ENCODE measurements at regions of chr5 and their contacts with region 1.

Region 1: DNA sequence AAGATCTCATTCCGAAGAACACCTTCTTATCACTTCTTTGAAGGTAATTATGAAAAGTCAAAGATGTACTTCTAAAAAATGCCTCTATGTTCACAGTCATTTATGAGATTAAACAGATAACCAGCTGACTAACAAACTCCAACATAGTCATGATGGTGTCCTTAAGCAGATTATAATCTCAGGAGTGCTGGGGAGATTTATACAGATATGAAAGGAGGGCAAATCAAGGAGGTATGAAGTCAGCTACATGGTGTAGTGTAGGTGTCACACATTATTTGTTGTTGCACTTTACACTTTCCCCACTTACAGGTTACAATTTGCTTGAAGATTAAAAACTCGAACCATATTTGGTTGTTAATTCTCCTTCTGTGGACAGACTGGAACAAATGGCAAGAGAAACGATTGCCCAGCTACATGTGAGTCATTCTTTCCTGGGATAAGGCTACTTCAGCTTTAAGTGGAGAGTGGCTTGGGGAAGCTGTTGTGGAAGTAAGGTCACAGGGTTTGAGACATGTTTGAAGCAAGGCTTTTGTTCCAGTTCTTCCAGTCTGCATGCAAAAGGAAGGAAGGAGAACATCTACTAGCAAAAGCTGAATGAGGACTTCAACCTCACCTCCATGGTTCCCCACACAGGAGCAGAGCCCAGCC is 320.1 kb downstream of the ADGRV1 start:
- DNase-seq: no peak

Region 2: DNA sequence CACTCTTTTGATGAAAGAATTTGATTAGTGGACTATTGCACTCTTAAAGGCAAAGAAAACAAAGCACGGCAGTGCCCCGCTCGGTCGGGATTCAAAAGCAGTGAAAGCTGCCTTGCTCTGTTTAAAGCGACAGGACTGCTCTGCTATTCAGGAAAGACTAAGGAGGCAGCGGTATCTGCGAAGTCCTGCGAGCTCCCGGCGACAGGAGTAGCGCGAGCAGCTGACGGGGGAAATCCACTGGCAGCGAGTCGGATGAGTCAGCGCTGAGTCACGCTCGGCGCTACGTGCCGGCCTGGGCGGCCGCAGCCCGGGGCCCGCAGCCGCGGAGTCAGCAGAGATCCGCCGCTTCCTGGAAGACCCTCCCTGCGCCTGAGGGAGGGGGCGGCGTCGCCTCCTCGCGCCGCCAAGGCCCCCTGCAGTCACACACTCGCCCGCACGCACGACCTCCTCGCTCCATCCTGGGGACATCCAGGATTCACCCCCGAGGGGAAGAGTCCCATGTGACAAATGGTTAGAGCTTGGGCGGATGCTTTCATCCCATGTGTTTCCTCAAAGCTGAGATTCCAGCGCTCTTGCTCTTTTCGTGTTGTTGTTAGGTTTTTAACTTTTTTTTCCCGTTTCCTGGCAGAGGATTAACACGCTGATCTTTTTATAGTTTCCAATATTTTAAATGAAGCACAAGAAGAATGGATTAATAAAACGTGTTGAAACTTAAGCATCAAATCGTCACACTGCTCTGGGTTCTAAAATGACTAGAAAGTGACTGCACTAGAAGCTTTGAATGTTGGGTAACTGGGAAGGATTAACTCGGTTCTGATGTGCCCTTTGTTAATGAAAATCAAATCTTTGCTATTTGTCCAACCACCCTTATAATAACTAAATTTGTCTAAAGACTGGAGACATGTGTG is 401.9 kb after region 1 on chr5:
- intact Hi-C with region 1: loop called (anchors 5 kb)
- DNase-seq: peak; percentile 98

Measured in cardiac septum (tissue), 1 donor.